Activated naive CD4-positive, alpha-beta T cell treated with anti-CD3 and anti-CD28 coated beads for 36 hours (primary cell): ENCODE measurements at regions of chr10 and their contacts with region 1.

Region 1: GRCh38 chr10:129466703-129467358 is at the start of gene MGMT:
- DNase-seq: peak; percentile 98
- H3K4me3 Mint-ChIP-seq: peak within 1 kb of the TSS; percentile 78
- H3K27ac Mint-ChIP-seq: peak within 1 kb of the TSS; percentile 70
- H3K4me1 Mint-ChIP-seq: peaks cover 14% of the 10 kb centered on the region
- H3K27me3 Mint-ChIP-seq: no peaks in the 10 kb centered on the region
- total RNA-seq, gene MGMT: 24.6 to 26.0 TPM

Region 2: DNA sequence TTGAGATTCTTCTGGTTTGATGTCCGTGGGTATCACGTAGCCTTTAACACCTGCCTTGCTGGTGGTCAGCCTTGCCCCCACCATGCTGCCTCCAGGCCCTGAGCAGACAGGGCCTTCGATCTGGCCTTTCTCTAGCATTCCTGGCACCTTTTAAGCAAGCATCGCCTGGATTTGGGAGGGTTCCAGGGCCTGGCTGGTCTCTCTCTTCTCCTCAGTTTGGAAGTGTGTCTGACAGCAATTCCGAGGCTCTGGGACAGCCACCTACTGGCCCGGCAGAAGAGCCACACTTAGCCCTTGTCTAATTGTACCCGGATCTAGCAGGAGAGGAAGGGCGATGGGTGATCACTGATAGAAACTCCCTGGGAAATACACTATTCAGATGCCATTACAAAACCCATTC is 899.3 kb before region 1 on chr10:
- CTCF ChIA-PET with region 1: no interaction called
- intact Hi-C with region 1: no loop called
- DNase-seq: no peak
- H3K4me3 Mint-ChIP-seq: no peak overlapping the region
- H3K27ac Mint-ChIP-seq: no peak overlapping the region
- H3K4me1 Mint-ChIP-seq: no peaks in the 10 kb centered on the region
- H3K27me3 Mint-ChIP-seq: peaks cover 2% of the 10 kb centered on the region

Region 3: DNA sequence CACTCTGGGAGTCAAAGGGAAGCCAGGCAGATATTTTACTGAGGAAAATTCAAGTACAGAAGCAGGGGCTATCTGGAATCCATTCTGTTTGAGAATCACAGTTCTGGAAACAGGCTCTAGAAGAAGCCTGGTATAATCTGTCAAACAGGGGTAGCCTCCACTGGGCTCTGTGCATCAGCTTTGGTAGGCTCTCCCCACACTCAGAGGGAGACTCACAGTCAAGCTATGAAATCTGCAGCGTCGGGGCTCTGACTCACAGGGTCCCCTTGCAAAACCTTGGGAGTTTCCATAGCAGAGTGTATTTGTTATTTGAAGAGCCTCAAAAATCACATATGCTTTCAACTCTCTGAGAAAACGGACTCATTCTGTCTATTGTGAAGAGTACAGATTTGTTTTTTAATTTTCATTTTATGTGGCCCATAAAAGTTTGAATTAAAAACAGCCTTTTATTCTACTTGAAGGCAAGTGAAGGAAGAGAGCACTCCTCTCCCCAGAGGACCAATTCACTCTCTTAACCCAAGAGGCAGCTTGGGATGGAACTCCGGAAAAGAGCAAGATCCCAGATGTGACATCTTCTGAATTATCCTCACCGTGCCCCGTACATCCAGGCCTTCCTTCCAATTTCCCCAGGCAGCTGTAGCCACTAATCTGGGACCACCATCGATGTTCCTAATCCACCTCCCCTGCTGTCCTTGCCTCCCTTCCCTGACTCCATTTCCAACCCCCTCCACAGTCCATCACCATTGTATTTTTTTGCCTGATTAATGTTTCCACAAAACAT is 590.7 kb before region 1 on chr10:
- CTCF ChIA-PET with region 1: no interaction called
- intact Hi-C with region 1: no loop called
- DNase-seq: no peak
- H3K4me3 Mint-ChIP-seq: no peak overlapping the region
- H3K27ac Mint-ChIP-seq: no peak overlapping the region
- H3K4me1 Mint-ChIP-seq: no peaks in the 10 kb centered on the region
- H3K27me3 Mint-ChIP-seq: peaks cover 3% of the 10 kb centered on the region

Region 4: GRCh38 chr10:129963641-129964501 is 497.0 kb after region 1 on chr10 and contains the start of gene EBF3:
- CTCF ChIA-PET with region 1: no interaction called
- intact Hi-C with region 1: loop called (anchors 5 kb)
- DNase-seq: no peak
- H3K4me3 Mint-ChIP-seq: peak within 1 kb of the TSS; percentile 68
- H3K27ac Mint-ChIP-seq: no peak within 1 kb of the TSS
- H3K4me1 Mint-ChIP-seq: peaks cover 23% of the 10 kb centered on the region
- H3K27me3 Mint-ChIP-seq: peaks cover 64% of the 10 kb centered on the region
- total RNA-seq, gene EBF3: not detected

Region 5: GRCh38 chr10:130136226-130137089 is 669.6 kb after region 1 on chr10 and contains the start of gene GLRX3:
- CTCF ChIA-PET with region 1: no interaction called
- intact Hi-C with region 1: loop called (anchors 1 kb)
- DNase-seq: peak; percentile 86
- H3K4me3 Mint-ChIP-seq: peak within 1 kb of the TSS; percentile 91
- H3K27ac Mint-ChIP-seq: peak within 1 kb of the TSS; percentile 75
- H3K4me1 Mint-ChIP-seq: peaks cover 48% of the 10 kb centered on the region
- H3K27me3 Mint-ChIP-seq: peaks cover 6% of the 10 kb centered on the region
- total RNA-seq, gene GLRX3: 86.2 to 86.5 TPM